Transverse colon (tissue), 4 donors: ENCODE measurements at regions of chr17 and their contacts with region 1.

Region 1: GRCh38 chr17:36601303-36602029 is at the start of gene MRM1:
- DNase-seq: peak; percentile 95
- H3K4me3 ChIP-seq: peak within 1 kb of the TSS; percentile 61 to 98 (median 82)
- H3K27ac ChIP-seq: peak within 1 kb of the TSS; percentile 85 to 96 (median 90)
- H3K4me1 ChIP-seq: peaks cover 10 to 63% (median 51%) of the 10 kb centered on the region in 4 donors
- H3K27me3 ChIP-seq: no peaks in the 10 kb centered on the region
- CTCF ChIP-seq: peak in 2 of 5 experiments; percentile 19 to 32
- EP300 ChIP-seq: no peak
- POLR2A ChIP-seq: peak; percentile 77
- total RNA-seq, gene MRM1: 9.5 to 20.9 (median 11.5) TPM

Region 2: GRCh38 chr17:37239690-37240334 is 638.3 kb after region 1 on chr17:
- in situ Hi-C with region 1: loop called in 1 of 4 experiments (anchors 25 kb)
- intact Hi-C with region 1: no loop called
- DNase-seq: no peak
- H3K4me3 ChIP-seq: no peak overlapping the region
- H3K27ac ChIP-seq: no peak overlapping the region
- H3K4me1 ChIP-seq: no peaks in the 10 kb centered on the region
- H3K27me3 ChIP-seq: no peaks in the 10 kb centered on the region
- CTCF ChIP-seq: peak; percentile 35 to 52 (median 47)
- EP300 ChIP-seq: no peak
- POLR2A ChIP-seq: no peak

Region 3: GRCh38 chr17:37392024-37392590 is 790.6 kb after region 1 on chr17:
- in situ Hi-C with region 1: loop called in 2 of 4 experiments (anchors 25 kb)
- intact Hi-C with region 1: no loop called
- DNase-seq: no peak
- H3K4me3 ChIP-seq: no peak overlapping the region
- H3K27ac ChIP-seq: no peak overlapping the region
- H3K4me1 ChIP-seq: peaks cover 0 to 25% (median 2%) of the 10 kb centered on the region in 4 donors
- H3K27me3 ChIP-seq: no peaks in the 10 kb centered on the region
- CTCF ChIP-seq: no peak
- EP300 ChIP-seq: no peak
- POLR2A ChIP-seq: no peak